ENCODE measurements at regions of chr12 and their contacts with region 1.

Region 1: DNA sequence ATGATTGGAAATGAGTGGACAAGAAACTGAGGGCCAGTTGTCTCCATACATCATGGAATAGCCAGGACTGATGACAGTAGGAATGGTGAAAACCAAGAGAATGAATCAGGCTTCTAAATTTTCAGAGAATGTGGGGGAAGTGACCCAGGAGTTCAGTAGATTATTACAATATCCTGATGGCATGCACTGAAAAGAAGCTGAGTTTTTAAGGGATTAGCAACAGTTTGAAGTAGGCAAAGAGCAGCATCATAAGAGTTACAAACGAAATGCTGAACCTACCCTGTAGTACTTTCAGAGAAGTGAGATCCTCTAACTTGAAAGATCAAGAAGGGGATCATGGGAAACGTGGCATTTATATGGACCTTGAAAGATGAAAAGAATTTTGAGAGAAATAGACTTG is 13.2 kb downstream of the SLC2A14 start:
- DNase-seq: no peak
- ATAC-seq: no peak
- H3K4me3 ChIP-seq: no peak overlapping the region
- H3K27ac ChIP-seq: no peak overlapping the region
- H3K4me1 ChIP-seq: no peaks in the 10 kb centered on the region
- H3K27me3 ChIP-seq: no peaks in the 10 kb centered on the region
- CTCF ChIP-seq: no peak

Region 2: GRCh38 chr12:7995266-7995963 is 135.9 kb after region 1 on chr12:
- CTCF ChIA-PET with region 1: interaction called, 4 read pairs
- POLR2A ChIA-PET with region 1: no interaction called
- in situ Hi-C with region 1: no loop called
- intact Hi-C with region 1: loop called (anchors 2 kb)
- DNase-seq: no peak
- ATAC-seq: peak; percentile 99
- H3K4me3 ChIP-seq: no peak overlapping the region
- H3K27ac ChIP-seq: no peak overlapping the region
- H3K4me1 ChIP-seq: no peaks in the 10 kb centered on the region
- H3K27me3 ChIP-seq: no peaks in the 10 kb centered on the region
- CTCF ChIP-seq: peak; percentile 83

Measured in Panc1 (cell line).